Ovary (tissue), 10 donors: ENCODE measurements at regions of chr10 and their contacts with region 1.

Region 1: DNA sequence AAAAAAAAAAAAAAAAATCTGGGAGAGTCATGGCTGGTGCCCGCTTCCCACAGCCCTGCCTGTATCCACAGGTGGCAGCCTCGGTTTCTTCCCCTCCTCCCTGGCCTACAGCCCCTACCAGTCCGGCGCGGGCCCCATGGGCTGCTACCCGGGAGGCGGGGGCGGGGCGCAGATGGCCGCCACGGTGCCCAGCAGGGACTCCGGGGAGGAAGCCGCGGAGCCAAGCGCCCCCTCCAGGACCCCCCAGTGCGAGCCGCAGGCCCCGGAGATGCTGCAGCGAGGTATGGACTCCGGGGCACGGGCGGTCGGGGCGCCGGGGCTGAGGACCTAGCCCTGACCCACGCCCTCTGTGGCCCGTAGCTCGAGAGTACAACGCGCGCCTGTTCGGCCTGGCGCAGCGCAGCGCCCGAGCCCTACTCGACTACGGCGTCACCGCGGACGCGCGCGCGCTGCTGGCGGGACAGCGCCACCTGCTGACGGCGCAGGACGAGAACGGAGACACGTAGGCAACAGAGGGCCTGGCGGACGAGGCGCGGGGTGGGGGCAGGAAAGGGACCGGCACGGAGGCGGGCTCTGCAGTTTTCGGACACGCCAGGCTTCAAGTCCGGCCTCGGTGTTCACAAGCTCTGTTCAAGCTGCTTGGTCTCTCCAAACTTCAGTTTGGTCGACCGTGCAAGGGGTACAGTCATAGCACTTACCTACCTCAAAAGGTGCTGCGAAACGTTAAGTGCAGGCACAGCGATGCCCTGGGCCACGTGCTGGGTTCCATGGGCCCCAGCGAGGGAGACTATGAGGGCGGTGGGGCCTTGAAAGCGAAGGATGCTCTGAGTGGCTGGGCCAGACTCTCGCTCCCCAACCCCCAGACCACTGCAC is 3.9 kb downstream of the NFKB2 start:
- DNase-seq: peak; percentile 85 to 94 (median 90)
- H3K4me3 ChIP-seq: peak overlapping the region; percentile 55
- H3K27ac ChIP-seq: peak overlapping the region; percentile 90 to 92
- H3K4me1 ChIP-seq: peaks cover 11% of the 10 kb centered on the region
- H3K27me3 ChIP-seq: no peaks in the 10 kb centered on the region
- CTCF ChIP-seq: peak; percentile 98 to 99 (median 98)
- EP300 ChIP-seq: no peak
- POLR2A ChIP-seq: peak; percentile 63

Region 2: GRCh38 chr10:100569618-100570473 is 1829.6 kb before region 1 on chr10:
- intact Hi-C with region 1: no loop called
- DNase-seq: no peak
- H3K4me3 ChIP-seq: no peak overlapping the region
- H3K27ac ChIP-seq: no peak overlapping the region
- H3K4me1 ChIP-seq: no peaks in the 10 kb centered on the region
- H3K27me3 ChIP-seq: no peaks in the 10 kb centered on the region
- CTCF ChIP-seq: no peak
- EP300 ChIP-seq: no peak
- POLR2A ChIP-seq: no peak

Region 3: DNA sequence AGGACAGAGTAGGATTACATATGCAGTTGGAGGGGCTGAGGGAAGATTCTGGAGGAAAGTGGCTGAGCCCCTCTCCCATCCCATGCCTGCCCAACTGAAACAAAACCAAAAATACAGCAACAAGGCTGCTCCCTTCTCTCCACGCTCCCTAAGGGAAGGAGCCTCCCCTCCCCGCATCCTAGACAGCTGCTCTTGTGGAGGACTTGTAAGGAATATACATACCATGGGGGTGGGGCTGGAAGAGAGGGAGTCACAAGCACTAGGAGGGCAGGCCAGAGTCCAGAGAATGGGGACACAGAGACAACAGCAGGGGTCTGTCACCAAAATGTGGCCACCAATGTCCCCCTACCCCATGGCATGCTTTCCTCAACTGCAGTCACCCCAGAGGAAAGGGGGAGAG is 292.5 kb before region 1 on chr10:
- intact Hi-C with region 1: no loop called
- DNase-seq: no peak
- H3K4me3 ChIP-seq: no peak overlapping the region
- H3K27ac ChIP-seq: no peak overlapping the region
- H3K4me1 ChIP-seq: no peaks in the 10 kb centered on the region
- H3K27me3 ChIP-seq: no peaks in the 10 kb centered on the region
- CTCF ChIP-seq: no peak
- EP300 ChIP-seq: no peak
- POLR2A ChIP-seq: no peak

Region 4: DNA sequence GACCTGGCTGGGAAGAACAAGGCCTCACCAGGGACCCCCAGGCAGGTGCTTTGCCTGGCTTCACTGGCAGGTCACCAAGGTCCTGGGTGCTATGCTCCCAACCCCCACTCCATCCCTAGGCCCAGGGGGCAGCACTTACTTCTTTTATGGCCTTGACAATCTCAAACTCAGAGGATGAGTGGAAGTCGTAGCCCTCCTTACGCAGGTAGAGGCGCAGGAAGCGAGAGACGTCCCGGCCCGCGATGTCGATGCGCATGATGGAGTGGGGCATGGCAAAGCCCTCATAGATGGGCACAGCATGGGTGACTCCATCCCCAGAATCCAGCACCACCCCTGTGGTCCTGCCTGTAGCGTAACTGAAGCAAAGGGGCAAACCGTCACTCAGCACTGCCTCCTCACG is 84.6 kb after region 1 on chr10:
- intact Hi-C with region 1: loop called in 1 of 4 experiments (anchors 5 kb)
- DNase-seq: no peak
- H3K4me3 ChIP-seq: no peak overlapping the region
- H3K27ac ChIP-seq: no peak overlapping the region
- H3K4me1 ChIP-seq: no peaks in the 10 kb centered on the region
- H3K27me3 ChIP-seq: no peaks in the 10 kb centered on the region
- CTCF ChIP-seq: no peak
- EP300 ChIP-seq: no peak
- POLR2A ChIP-seq: no peak